ENCODE measurements at regions of chr11 and their contacts with region 1.

Region 1: DNA sequence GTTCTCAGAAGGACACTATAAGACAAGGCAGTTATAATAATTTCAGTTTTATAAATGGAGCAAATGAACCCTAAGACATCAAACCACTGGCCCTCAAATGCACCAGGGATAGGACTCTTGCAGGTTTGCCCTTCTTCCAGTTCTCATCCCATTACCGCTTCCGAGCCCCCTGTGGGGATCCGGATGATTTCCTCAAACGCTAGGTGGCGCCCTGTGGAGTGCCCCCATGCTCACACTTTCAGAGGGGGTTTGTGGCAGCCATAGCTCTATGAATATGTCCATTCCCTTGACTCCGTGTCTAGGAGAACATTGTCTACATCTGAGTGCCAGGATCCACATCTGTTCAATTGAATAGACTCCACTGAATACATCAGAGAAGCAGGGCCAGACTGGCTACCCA is 816.3 kb downstream of the NTM start:
- DNase-seq: peak in 1 of 2 experiments; percentile 79
- H3K4me3 ChIP-seq: no peak overlapping the region
- H3K27ac ChIP-seq: no peak overlapping the region
- H3K4me1 ChIP-seq: no peaks in the 10 kb centered on the region; a peak in 1 of 7 replicates
- H3K27me3 ChIP-seq: no peaks in the 10 kb centered on the region
- CTCF ChIP-seq: peak; percentile 58 to 75 (median 62)
- EP300 ChIP-seq: no peak
- POLR2A ChIP-seq: no peak
- RAD21 ChIP-seq: peak; percentile 42 to 56

Region 2: GRCh38 chr11:132114185-132114584 is 72.5 kb before region 1 on chr11:
- CTCF ChIA-PET with region 1: no interaction called
- POLR2A ChIA-PET with region 1: no interaction called
- DNase-seq: no peak
- H3K4me3 ChIP-seq: no peak overlapping the region
- H3K27ac ChIP-seq: no peak overlapping the region
- H3K4me1 ChIP-seq: peaks cover 2 to 15% (median 12%) of the 10 kb centered on the region in 4 experiments; a peak in 6 of 7 replicates
- H3K27me3 ChIP-seq: no peaks in the 10 kb centered on the region
- CTCF ChIP-seq: peak; percentile 77 to 88 (median 85)
- EP300 ChIP-seq: no peak
- POLR2A ChIP-seq: no peak
- RAD21 ChIP-seq: peak; percentile 72 to 85

Region 3: GRCh38 chr11:132168344-132168981 is 18.2 kb before region 1 on chr11:
- CTCF ChIA-PET with region 1: interaction called, 13 read pairs
- POLR2A ChIA-PET with region 1: no interaction called
- DNase-seq: no peak
- H3K4me3 ChIP-seq: no peak overlapping the region
- H3K27ac ChIP-seq: no peak overlapping the region
- H3K4me1 ChIP-seq: no peaks in the 10 kb centered on the region
- H3K27me3 ChIP-seq: no peaks in the 10 kb centered on the region
- CTCF ChIP-seq: no peak
- EP300 ChIP-seq: no peak
- POLR2A ChIP-seq: no peak
- RAD21 ChIP-seq: no peak

Region 4: DNA sequence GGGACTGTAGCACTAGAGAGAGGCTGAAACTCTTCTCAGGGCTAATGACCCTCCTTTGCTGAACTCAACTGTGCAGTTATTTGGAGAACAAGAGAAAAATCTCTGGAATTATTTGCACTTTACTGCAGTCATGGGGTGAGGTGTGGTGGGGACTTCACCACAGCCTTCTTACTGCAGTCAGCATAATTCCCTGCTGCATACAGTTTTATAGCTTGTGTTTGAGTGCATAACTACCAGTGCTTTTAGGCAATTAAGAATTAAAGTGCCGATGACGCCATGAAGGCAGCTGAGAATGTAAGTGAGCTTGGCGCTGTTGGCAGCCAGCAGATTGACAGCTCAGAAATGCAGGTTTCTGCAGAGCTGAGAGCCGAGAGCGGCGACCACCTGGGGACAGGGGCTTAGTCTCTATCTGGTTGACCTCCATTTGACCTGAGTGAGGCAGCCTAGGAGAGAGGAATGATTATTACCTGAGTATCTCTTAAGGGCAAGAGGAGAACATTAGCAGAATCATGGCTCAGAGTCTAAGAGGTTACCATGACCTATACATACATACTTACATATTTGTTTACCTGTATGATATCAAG is 13.7 kb after region 1 on chr11:
- CTCF ChIA-PET with region 1: interaction called, 41 read pairs
- POLR2A ChIA-PET with region 1: no interaction called
- DNase-seq: no peak
- H3K4me3 ChIP-seq: no peak overlapping the region
- H3K27ac ChIP-seq: no peak overlapping the region
- H3K4me1 ChIP-seq: no peaks in the 10 kb centered on the region
- H3K27me3 ChIP-seq: no peaks in the 10 kb centered on the region
- CTCF ChIP-seq: no peak
- EP300 ChIP-seq: no peak
- POLR2A ChIP-seq: no peak
- RAD21 ChIP-seq: no peak

Region 5: DNA sequence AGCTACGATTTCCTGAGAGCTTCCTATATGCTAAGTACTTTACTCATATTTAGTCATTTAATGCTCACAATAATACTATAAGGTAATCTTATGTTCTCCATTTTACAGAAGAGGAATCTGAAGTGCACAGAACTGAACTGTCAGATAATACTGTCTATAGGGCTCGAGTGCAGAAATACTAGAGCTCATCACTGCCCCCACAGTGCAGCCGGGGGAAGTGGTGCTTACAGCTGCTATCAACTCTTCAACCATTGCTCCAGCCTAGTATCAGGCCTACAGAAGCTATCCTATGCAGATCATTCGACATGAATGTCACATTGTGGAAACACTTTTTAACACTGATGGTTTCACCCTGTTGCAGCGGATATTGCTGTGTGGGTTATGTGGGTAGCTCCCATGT is 113.6 kb after region 1 on chr11:
- CTCF ChIA-PET with region 1: interaction called, 20 read pairs
- POLR2A ChIA-PET with region 1: no interaction called
- DNase-seq: no peak
- H3K4me3 ChIP-seq: no peak overlapping the region
- H3K27ac ChIP-seq: no peak overlapping the region
- H3K4me1 ChIP-seq: no peaks in the 10 kb centered on the region
- H3K27me3 ChIP-seq: no peaks in the 10 kb centered on the region
- CTCF ChIP-seq: peak; percentile 54 to 76 (median 64)
- EP300 ChIP-seq: no peak
- POLR2A ChIP-seq: no peak
- RAD21 ChIP-seq: peak; percentile 36 to 51; a peak in 2 of 4 replicates

Measured in H1 (cell line).